PC-9 (cell line): ENCODE measurements at regions of chr5 and their contacts with region 1.

Region 1: DNA sequence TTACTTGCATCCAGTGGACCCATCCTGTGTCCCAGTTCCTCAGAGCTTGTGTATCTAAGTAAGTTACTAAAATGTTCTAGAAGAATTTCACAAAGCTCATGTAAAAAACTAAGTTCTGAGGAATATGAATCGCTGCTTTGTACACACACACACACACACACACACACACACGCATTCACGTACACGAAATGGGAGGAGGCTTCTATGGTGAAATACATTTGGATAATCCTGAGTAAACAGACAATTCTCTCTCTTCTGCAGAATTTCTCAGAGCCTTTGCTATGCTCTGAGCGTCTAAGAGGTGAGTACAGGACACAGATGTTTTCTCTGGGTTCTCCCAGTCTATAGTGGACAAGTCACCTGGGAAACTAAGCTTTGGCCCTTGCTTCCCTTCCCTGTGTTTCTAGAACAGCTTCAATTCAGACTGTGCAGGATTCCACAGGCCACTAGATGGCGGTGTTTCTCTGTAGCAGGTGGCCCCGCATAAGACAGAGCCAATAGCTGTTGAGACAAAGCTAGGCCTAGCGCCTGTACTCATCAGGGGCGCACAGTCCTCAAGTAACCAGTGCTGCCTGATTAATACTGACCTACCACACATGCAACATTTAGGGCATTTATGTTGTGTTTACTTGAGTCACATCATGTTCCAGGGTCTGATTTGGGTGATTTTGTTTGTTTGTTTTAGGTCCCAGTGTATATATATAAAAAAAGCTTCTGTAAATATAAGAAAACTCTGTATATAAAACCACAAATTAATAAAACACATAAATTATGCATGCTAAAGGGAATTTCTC is 114.8 kb downstream of the LIFR start:
- DNase-seq: peak; percentile 79 to 96
- H3K4me3 ChIP-seq: no peak overlapping the region
- H3K27ac ChIP-seq: no peak overlapping the region
- H3K4me1 ChIP-seq: no peaks in the 10 kb centered on the region
- H3K27me3 ChIP-seq: peaks cover 10% of the 10 kb centered on the region
- CTCF ChIP-seq: peak; percentile 99

Region 2: GRCh38 chr5:38382898-38383297 is 58.8 kb before region 1 on chr5:
- CTCF ChIA-PET with region 1: interaction called, 6 read pairs
- POLR2A ChIA-PET with region 1: no interaction called
- intact Hi-C with region 1: loop called (anchors 1 kb)
- DNase-seq: peak; percentile 58 to 77
- H3K4me3 ChIP-seq: no peak overlapping the region
- H3K27ac ChIP-seq: no peak overlapping the region
- H3K4me1 ChIP-seq: no peaks in the 10 kb centered on the region
- H3K27me3 ChIP-seq: peaks cover 37% of the 10 kb centered on the region
- CTCF ChIP-seq: peak; percentile 88

Region 3: DNA sequence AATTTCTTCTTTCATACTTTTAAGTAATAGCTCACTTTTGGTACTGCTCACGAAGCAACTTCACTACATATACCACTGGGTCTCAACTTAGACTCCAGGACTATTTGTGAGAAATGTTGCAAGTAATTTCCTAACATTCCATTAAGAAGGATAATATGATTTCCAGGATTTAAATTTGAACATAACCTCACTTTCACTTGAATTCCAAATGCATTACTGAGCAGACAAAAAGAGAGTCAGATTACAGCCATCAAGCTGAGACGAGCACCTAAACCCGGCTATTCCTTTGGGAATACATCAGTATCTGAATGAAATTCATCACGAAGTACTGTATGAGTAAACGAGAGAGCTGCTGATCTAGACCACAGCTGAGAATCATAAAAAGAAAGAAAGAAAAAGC is 67.5 kb after region 1 on chr5:
- CTCF ChIA-PET with region 1: no interaction called
- POLR2A ChIA-PET with region 1: no interaction called
- intact Hi-C with region 1: no loop called
- DNase-seq: no peak
- H3K4me3 ChIP-seq: no peak overlapping the region
- H3K27ac ChIP-seq: no peak overlapping the region
- H3K4me1 ChIP-seq: no peaks in the 10 kb centered on the region
- H3K27me3 ChIP-seq: no peaks in the 10 kb centered on the region
- CTCF ChIP-seq: no peak

Region 4: DNA sequence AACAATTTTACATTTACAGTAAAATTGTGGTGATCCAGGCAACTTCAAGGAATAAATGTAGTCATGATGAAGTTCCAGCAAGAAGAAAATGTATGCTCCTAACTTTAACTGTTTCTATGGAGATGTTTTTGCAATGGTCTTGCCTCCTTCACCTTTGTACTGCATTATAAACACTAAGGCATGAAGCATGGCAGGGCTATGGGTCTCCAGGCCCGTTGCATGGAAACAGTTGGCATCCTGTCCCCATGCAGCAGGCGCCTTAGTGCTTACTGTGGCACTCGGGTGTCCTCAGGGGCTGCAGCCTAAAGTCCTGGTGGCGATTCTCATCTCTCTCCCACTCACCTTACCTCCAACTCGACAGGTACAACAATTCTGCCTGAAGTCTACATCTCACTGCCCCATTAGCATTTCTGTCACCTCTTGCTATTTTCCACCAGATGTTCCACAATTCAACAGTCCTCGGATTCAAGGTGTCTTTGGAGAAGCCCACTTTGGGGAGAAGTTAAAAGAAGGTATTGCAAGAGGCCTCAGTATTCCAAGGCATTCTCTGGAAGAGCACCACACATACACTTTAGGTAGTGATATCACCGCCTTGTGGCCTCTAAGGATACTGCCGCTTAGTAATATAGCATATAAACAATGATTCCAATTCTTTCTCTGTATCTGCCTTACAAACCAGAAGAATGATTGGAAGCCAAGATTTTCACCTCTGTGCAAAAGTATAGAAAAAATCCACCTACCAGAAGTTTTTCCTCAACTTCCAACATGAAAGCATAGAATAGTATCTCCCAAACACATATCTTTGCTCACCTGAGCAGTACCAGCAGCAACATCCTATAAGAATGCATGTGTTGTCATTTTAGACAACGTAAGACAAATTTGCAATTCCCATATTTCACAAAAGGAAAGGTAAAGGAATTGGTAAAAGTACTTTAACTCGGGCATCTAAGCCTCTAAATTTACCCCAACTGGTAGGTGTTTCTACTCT is 109.7 kb after region 1 on chr5:
- CTCF ChIA-PET with region 1: interaction called, 14 read pairs
- POLR2A ChIA-PET with region 1: no interaction called
- intact Hi-C with region 1: loop called (anchors 1 kb)
- DNase-seq: peak in 1 of 2 experiments; percentile 25
- H3K4me3 ChIP-seq: no peak overlapping the region
- H3K27ac ChIP-seq: no peak overlapping the region
- H3K4me1 ChIP-seq: peaks cover 11% of the 10 kb centered on the region
- H3K27me3 ChIP-seq: 0 out of 2 replicates have a peak, but pooled peaks cover 15% of the 10 kb centered on the region
- CTCF ChIP-seq: peak; percentile 80

Region 5: DNA sequence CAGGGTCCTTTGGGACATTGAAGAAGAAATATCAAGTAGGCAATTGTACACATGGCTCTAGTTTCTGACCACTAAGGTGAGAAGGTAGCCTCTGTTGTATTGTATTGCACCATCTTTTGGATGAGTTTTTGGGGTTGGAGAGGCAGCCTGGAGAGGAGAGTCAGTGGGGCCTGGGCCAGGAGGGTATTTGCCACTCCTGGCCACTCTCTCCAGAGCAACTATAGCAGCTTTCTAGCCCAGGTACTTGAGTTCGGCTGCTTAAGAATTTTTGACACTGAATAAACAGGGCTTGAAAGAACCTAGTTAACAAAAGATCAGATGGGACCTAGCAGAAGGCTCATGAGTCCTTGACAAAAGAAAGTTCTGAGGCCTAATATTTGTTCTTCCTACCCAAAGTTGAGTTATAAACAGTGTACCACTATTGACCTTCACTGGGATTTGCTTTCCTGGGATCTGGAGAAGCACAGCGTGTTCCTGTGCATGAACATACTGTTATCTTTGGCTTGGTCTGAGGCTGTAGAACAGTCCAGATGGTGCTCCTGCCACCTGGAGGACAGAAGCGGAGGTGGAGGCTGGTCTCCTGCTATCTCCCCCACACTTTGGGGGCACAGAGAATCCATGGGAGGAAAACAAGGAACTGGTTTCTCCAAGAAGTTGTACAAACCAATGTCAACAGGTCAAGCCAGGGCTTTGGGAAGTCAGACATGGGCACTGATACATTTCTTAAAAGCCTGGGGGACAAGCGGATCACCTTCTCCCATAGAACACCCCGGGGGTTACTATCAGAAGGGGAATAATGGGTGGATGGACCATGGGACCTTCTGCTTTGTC is 225.2 kb after region 1 on chr5:
- CTCF ChIA-PET with region 1: interaction called, 26 read pairs
- POLR2A ChIA-PET with region 1: no interaction called
- intact Hi-C with region 1: loop called (anchors 1 kb)
- DNase-seq: peak in 1 of 2 experiments; percentile 52
- H3K4me3 ChIP-seq: no peak overlapping the region
- H3K27ac ChIP-seq: no peak overlapping the region
- H3K4me1 ChIP-seq: no peaks in the 10 kb centered on the region
- H3K27me3 ChIP-seq: no peaks in the 10 kb centered on the region
- CTCF ChIP-seq: peak; percentile 79

Region 6: DNA sequence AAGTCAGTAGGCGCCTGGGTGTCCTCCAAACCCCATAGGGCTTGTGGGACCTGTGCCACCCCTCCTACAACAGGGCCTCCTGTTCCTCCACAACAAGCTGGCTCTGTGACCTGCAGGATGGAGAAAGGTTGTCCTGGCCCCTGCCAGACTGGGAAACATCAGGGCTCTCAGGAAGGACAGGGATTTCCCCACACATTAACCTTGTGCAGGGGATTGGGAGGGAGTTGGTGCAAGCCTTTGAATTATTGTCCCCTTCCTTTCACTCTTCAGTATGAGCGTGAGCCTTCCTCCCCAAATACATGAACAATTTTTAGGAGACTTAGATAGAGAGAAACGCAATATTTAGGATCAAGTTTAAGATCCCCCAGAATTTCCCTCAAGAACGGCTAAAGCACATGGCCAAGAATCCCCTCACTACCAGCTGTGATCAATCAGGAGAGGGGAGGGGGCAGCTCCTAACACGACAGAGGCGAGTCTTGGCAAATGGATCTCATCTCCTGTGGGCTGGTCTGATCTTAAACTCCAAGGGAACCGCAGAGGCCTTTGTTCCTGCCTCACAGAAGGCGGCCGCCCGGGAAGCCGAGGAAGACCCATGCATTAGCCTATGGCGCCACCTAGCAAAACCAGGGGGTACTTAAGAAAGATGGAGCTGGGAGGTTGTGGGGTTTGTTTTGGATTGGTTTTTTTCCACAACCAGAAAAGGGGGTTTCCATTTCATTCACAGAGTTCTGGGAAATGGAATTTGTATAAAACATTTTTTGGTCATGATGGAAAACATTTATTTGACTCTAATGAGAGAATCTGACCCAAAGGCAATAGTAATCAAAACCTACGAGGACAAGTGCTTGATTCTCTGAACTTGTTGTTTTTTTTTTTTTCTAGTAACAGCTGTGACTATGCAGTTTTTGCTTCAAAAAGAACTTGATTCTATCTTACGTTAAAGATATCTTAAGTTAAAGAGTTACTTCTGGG is 368.0 kb after region 1 on chr5:
- CTCF ChIA-PET with region 1: interaction called, 183 read pairs
- POLR2A ChIA-PET with region 1: no interaction called
- intact Hi-C with region 1: loop called (anchors 1 kb)
- DNase-seq: peak in 1 of 2 experiments; percentile 88
- H3K4me3 ChIP-seq: no peak overlapping the region
- H3K27ac ChIP-seq: no peak overlapping the region
- H3K4me1 ChIP-seq: no peaks in the 10 kb centered on the region; the same call in 1 of the 2 replicates
- H3K27me3 ChIP-seq: no peaks in the 10 kb centered on the region
- CTCF ChIP-seq: peak; percentile 95